ENCODE measurements at regions of chr7 and their contacts with region 1.

Region 1: GRCh38 chr7:47827351-47827756 is 120.9 kb downstream of the PKD1L1 start:
- DNase-seq: no peak
- H3K4me3 ChIP-seq: no peak overlapping the region
- H3K27ac ChIP-seq: no peak overlapping the region
- H3K4me1 ChIP-seq: no peaks in the 10 kb centered on the region
- H3K27me3 ChIP-seq: no peaks in the 10 kb centered on the region
- CTCF ChIP-seq: no peak
- POLR2A ChIP-seq: no peak

Region 2: GRCh38 chr7:47273974-47274766 is 553.2 kb before region 1 on chr7:
- intact Hi-C with region 1: loop called in 1 of 2 experiments (anchors 10 kb)
- DNase-seq: no peak
- H3K4me3 ChIP-seq: no peak overlapping the region
- H3K27ac ChIP-seq: no peak overlapping the region
- H3K4me1 ChIP-seq: no peaks in the 10 kb centered on the region
- H3K27me3 ChIP-seq: no peaks in the 10 kb centered on the region
- CTCF ChIP-seq: no peak
- POLR2A ChIP-seq: no peak

Region 3: DNA sequence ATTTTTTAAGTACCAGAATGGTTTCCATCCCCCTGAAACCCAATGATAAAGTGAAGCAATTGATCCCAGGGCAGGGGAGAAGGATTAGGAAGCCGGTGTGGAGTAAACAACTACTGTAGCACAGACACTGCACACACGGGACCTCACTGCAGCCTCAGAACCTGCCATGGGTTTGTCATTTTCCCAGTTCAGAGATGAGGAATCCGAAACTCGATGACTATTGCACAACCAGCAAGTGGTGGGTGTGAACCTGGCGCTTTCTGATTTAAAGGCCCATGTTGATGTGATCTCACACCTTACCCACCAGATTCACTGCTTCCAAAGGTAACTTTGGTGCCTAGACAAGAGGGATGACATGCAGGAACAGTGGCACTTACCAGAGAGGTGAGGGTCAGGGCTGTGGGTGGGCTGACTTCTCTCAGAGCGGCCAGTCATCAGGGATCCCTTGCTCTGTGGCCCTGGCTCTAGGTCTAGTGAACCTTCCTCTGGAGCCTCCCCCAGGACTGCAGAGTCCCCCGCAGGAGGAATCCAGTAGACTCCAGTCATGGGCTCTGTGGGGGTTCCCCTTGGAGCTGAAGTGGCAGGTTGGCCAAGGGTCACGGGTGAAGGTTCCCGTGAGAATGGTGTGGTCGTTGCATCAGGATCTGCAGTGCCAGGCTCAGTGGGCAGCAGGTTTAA is 58.1 kb after region 1 on chr7:
- intact Hi-C with region 1: no loop called
- DNase-seq: peak in 1 of 7 donors; percentile 13
- H3K4me3 ChIP-seq: no peak overlapping the region
- H3K27ac ChIP-seq: no peak overlapping the region
- H3K4me1 ChIP-seq: no peaks in the 10 kb centered on the region
- H3K27me3 ChIP-seq: no peaks in the 10 kb centered on the region
- CTCF ChIP-seq: no peak
- POLR2A ChIP-seq: no peak

Measured in adrenal gland (tissue), 19 donors.